OCI-LY7 (cell line): ENCODE measurements at regions of chr1 and their contacts with region 1.

Region 1: GRCh38 chr1:109391626-109392025 is 6.1 kb downstream of the SORT1 start:
- DNase-seq: peak; percentile 74
- H3K4me3 ChIP-seq: peak overlapping the region; percentile 62
- H3K27ac ChIP-seq: peak overlapping the region; percentile 90
- H3K4me1 ChIP-seq: peaks cover 82% of the 10 kb centered on the region
- CTCF ChIP-seq: no peak

Region 2: DNA sequence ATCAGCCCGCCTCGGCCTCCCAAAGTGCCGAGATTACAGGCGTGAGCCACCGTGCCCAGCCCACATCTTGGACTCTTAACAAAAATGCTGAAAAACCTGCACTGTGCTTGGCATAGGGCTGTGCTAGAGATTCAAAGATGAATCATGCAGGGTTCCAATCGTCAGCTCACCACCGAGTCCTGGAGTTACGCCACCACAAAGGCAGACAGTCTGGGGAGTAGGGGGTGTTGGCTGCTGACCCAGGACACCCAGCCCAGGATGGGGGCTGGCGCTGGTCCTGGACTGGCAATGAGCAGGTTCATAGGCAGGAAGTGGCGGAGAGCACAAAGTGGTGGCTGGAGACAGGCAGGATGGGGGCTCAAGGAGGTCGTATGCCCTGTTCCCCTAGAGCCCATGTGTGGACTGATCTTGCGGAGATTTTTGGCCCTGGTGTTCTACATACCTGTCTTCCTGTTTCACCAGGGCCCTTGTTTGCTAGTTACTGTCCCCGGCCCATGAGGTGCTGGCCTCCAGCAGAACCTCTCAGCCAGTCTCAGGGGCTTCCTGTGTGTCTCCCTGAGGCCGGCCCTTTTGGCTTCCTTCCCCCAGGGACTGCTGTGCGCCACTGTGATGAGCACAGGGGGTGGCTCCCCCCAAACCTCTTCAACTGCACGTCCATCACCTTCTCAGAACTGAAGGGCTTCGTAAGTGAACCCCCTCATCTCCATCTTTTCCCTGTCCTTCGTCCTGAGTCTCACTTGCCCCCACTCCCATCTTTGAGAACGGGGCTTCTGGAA is 124.5 kb before region 1 on chr1:
- CTCF ChIA-PET with region 1: no interaction called
- POLR2A ChIA-PET with region 1: no interaction called
- intact Hi-C with region 1: no loop called
- DNase-seq: no peak
- H3K4me3 ChIP-seq: no peak overlapping the region
- H3K27ac ChIP-seq: no peak overlapping the region
- H3K4me1 ChIP-seq: no peaks in the 10 kb centered on the region
- CTCF ChIP-seq: no peak

Region 3: GRCh38 chr1:109379422-109379821 is 12.2 kb before region 1 on chr1:
- CTCF ChIA-PET with region 1: no interaction called
- POLR2A ChIA-PET with region 1: interaction called, 21 read pairs
- intact Hi-C with region 1: no loop called
- DNase-seq: no peak
- H3K4me3 ChIP-seq: no peak overlapping the region
- H3K27ac ChIP-seq: no peak overlapping the region
- H3K4me1 ChIP-seq: peaks cover 45% of the 10 kb centered on the region
- CTCF ChIP-seq: no peak